IMR-90 (cell line): ENCODE measurements at regions of chr16 and their contacts with region 1.

Region 1: GRCh38 chr16:71894921-71895678 is at the start of gene IST1:
- DNase-seq: peak; percentile 99
- ATAC-seq: peak; percentile 96
- H3K4me3 ChIP-seq: peak within 1 kb of the TSS; percentile 80
- H3K27ac ChIP-seq: peak within 1 kb of the TSS; percentile 97
- H3K4me1 ChIP-seq: peaks cover 2% of the 10 kb centered on the region
- H3K27me3 ChIP-seq: no peaks in the 10 kb centered on the region
- CTCF ChIP-seq: no peak
- POLR2A ChIP-seq: peak; percentile 92
- RAD21 ChIP-seq: no peak
- total RNA-seq, gene IST1: 175 and 186 TPM in 2 replicates

Region 2: DNA sequence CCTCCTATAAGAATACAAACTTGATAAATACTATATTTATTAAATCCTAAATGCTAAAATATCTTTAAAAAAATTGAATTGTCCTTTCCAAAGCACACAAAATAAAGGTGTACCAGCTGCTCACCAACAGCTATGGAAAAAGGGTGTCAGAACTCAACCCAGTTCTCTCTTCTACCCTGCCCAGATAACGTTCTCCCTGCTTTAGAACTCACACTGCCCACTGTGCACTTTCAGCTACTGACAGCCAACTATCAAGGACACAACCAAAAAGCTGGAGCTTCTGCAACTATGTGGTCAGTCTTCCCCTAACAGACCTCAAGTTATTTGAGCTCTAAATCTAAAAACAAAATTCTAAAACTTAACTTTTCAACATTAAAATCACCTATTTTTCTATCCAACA is 100.2 kb before region 1 on chr16:
- CTCF ChIA-PET with region 1: no interaction called
- POLR2A ChIA-PET with region 1: interaction called, 11 read pairs
- dilution Hi-C with region 1: no loop called
- in situ Hi-C with region 1: no loop called
- intact Hi-C with region 1: no loop called
- DNase-seq: no peak
- ATAC-seq: no peak
- H3K4me3 ChIP-seq: no peak overlapping the region
- H3K27ac ChIP-seq: peak overlapping the region; percentile 22; the same call in 1 of the 2 replicates
- H3K4me1 ChIP-seq: peaks cover 7% of the 10 kb centered on the region
- H3K27me3 ChIP-seq: no peaks in the 10 kb centered on the region
- CTCF ChIP-seq: no peak
- POLR2A ChIP-seq: no peak
- RAD21 ChIP-seq: no peak

Region 3: GRCh38 chr16:71808593-71809459 is 86.3 kb before region 1 on chr16 and contains the start of gene AP1G1:
- CTCF ChIA-PET with region 1: no interaction called
- POLR2A ChIA-PET with region 1: interaction called, 3 read pairs
- dilution Hi-C with region 1: no loop called
- in situ Hi-C with region 1: no loop called
- intact Hi-C with region 1: loop called (anchors 1 kb)
- DNase-seq: peak; percentile 99
- ATAC-seq: peak; percentile 94
- H3K4me3 ChIP-seq: peak within 1 kb of the TSS; percentile 61
- H3K27ac ChIP-seq: peak within 1 kb of the TSS; percentile 99
- H3K4me1 ChIP-seq: peaks cover 10% of the 10 kb centered on the region
- H3K27me3 ChIP-seq: no peaks in the 10 kb centered on the region
- CTCF ChIP-seq: no peak
- POLR2A ChIP-seq: peak; percentile 96
- RAD21 ChIP-seq: no peak
- total RNA-seq, gene AP1G1: 86.1 and 86.7 TPM in 2 replicates

Region 4: GRCh38 chr16:71867939-71868338 is 27.2 kb before region 1 on chr16:
- CTCF ChIA-PET with region 1: no interaction called
- POLR2A ChIA-PET with region 1: interaction called, 17 read pairs
- dilution Hi-C with region 1: no loop called
- in situ Hi-C with region 1: no loop called
- intact Hi-C with region 1: no loop called
- DNase-seq: no peak
- ATAC-seq: no peak
- H3K4me3 ChIP-seq: no peak overlapping the region
- H3K27ac ChIP-seq: no peak overlapping the region
- H3K4me1 ChIP-seq: no peaks in the 10 kb centered on the region
- H3K27me3 ChIP-seq: no peaks in the 10 kb centered on the region
- CTCF ChIP-seq: no peak
- POLR2A ChIP-seq: no peak
- RAD21 ChIP-seq: no peak

Region 5: GRCh38 chr16:71912534-71913253 is 17.6 kb after region 1 on chr16:
- CTCF ChIA-PET with region 1: interaction called, 4 read pairs
- POLR2A ChIA-PET with region 1: no interaction called
- dilution Hi-C with region 1: no loop called
- in situ Hi-C with region 1: no loop called
- intact Hi-C with region 1: loop called (anchors 1 kb)
- DNase-seq: no peak
- ATAC-seq: no peak
- H3K4me3 ChIP-seq: no peak overlapping the region
- H3K27ac ChIP-seq: no peak overlapping the region
- H3K4me1 ChIP-seq: peaks cover 2% of the 10 kb centered on the region
- H3K27me3 ChIP-seq: no peaks in the 10 kb centered on the region
- CTCF ChIP-seq: no peak
- POLR2A ChIP-seq: no peak
- RAD21 ChIP-seq: no peak

Region 6: GRCh38 chr16:71929048-71929447 is 33.9 kb after region 1 on chr16:
- CTCF ChIA-PET with region 1: no interaction called
- POLR2A ChIA-PET with region 1: no interaction called
- dilution Hi-C with region 1: no loop called
- in situ Hi-C with region 1: no loop called
- intact Hi-C with region 1: loop called (anchors 1 kb)
- DNase-seq: peak; percentile 91
- ATAC-seq: peak; percentile 92
- H3K4me3 ChIP-seq: no peak overlapping the region
- H3K27ac ChIP-seq: no peak overlapping the region
- H3K4me1 ChIP-seq: peaks cover 23% of the 10 kb centered on the region
- H3K27me3 ChIP-seq: no peaks in the 10 kb centered on the region
- CTCF ChIP-seq: no peak
- POLR2A ChIP-seq: no peak; the same call in 1 of the 2 replicates
- RAD21 ChIP-seq: no peak

Region 7: GRCh38 chr16:71961066-71962039 is 66.3 kb after region 1 on chr16:
- CTCF ChIA-PET with region 1: interaction called, 4 read pairs
- POLR2A ChIA-PET with region 1: interaction called, 8 read pairs
- dilution Hi-C with region 1: no loop called
- in situ Hi-C with region 1: no loop called
- intact Hi-C with region 1: loop called (anchors 5 kb)
- DNase-seq: peak; percentile 83
- ATAC-seq: peak; percentile 99
- H3K4me3 ChIP-seq: no peak overlapping the region
- H3K27ac ChIP-seq: no peak overlapping the region
- H3K4me1 ChIP-seq: no peaks in the 10 kb centered on the region
- H3K27me3 ChIP-seq: no peaks in the 10 kb centered on the region; the same call in 1 of the 2 replicates
- CTCF ChIP-seq: peak; percentile 85
- POLR2A ChIP-seq: no peak
- RAD21 ChIP-seq: peak; percentile 83